WTC11 (cell line): ENCODE measurements at regions of chr19 and their contacts with region 1.

Region 1: GRCh38 chr19:19643158-19644053 is at the start of gene GMIP:
- DNase-seq: peak; percentile 93
- ATAC-seq: peak; percentile 94
- H3K4me3 Mint-ChIP-seq: peak within 1 kb of the TSS; percentile 94
- H3K27ac Mint-ChIP-seq: peak within 1 kb of the TSS; percentile 84
- H3K4me1 Mint-ChIP-seq: peaks cover 12% of the 10 kb centered on the region
- H3K27me3 Mint-ChIP-seq: peaks cover under 1% of the 10 kb centered on the region; the same call in 1 of the 2 replicates
- CTCF ChIP-seq: peak; percentile 92
- total RNA-seq, gene GMIP: 19.8 to 23.0 TPM (median 21.9 TPM) in 3 replicates

Region 2: GRCh38 chr19:19485161-19485997 is 158.0 kb before region 1 on chr19:
- CTCF ChIA-PET with region 1: no interaction called
- POLR2A ChIA-PET with region 1: no interaction called
- DNase-seq: no peak
- ATAC-seq: no peak
- H3K4me3 Mint-ChIP-seq: no peak overlapping the region
- H3K27ac Mint-ChIP-seq: peak overlapping the region; percentile 85
- H3K4me1 Mint-ChIP-seq: peaks cover 60% of the 10 kb centered on the region
- H3K27me3 Mint-ChIP-seq: no peaks in the 10 kb centered on the region
- CTCF ChIP-seq: no peak

Region 3: GRCh38 chr19:19540715-19541440 is 102.5 kb before region 1 on chr19:
- CTCF ChIA-PET with region 1: interaction called, 10 read pairs
- POLR2A ChIA-PET with region 1: no interaction called
- DNase-seq: peak; percentile 98
- ATAC-seq: peak; percentile 95
- H3K4me3 Mint-ChIP-seq: peak overlapping the region; percentile 88
- H3K27ac Mint-ChIP-seq: peak overlapping the region; percentile 85
- H3K4me1 Mint-ChIP-seq: peaks cover 6% of the 10 kb centered on the region
- H3K27me3 Mint-ChIP-seq: peaks cover 36% of the 10 kb centered on the region
- CTCF ChIP-seq: no peak

Region 4: GRCh38 chr19:19618219-19619051 is 25.0 kb before region 1 on chr19 and contains the start of gene PBX4:
- CTCF ChIA-PET with region 1: interaction called, 10 read pairs
- POLR2A ChIA-PET with region 1: no interaction called
- DNase-seq: peak; percentile 99
- ATAC-seq: peak; percentile 98
- H3K4me3 Mint-ChIP-seq: peak within 1 kb of the TSS; percentile 73
- H3K27ac Mint-ChIP-seq: no peak within 1 kb of the TSS
- H3K4me1 Mint-ChIP-seq: peaks cover 13% of the 10 kb centered on the region
- H3K27me3 Mint-ChIP-seq: peaks cover 29% of the 10 kb centered on the region
- CTCF ChIP-seq: no peak
- total RNA-seq, gene PBX4: 3.2 to 4.5 TPM (median 3.5 TPM) in 3 replicates

Region 5: GRCh38 chr19:19627621-19628500 is 15.5 kb before region 1 on chr19 and contains the start of gene LPAR2:
- CTCF ChIA-PET with region 1: interaction called, 23 read pairs
- POLR2A ChIA-PET with region 1: interaction called, 7 read pairs
- DNase-seq: peak; percentile 76
- ATAC-seq: peak; percentile 77
- H3K4me3 Mint-ChIP-seq: peak within 1 kb of the TSS; percentile 90
- H3K27ac Mint-ChIP-seq: peak within 1 kb of the TSS; percentile 98
- H3K4me1 Mint-ChIP-seq: peaks cover 17% of the 10 kb centered on the region
- H3K27me3 Mint-ChIP-seq: no peaks in the 10 kb centered on the region; the same call in 1 of the 2 replicates
- CTCF ChIP-seq: no peak
- total RNA-seq, gene LPAR2: 42.9 to 45.1 TPM (median 44.5 TPM) in 3 replicates

Region 6: DNA sequence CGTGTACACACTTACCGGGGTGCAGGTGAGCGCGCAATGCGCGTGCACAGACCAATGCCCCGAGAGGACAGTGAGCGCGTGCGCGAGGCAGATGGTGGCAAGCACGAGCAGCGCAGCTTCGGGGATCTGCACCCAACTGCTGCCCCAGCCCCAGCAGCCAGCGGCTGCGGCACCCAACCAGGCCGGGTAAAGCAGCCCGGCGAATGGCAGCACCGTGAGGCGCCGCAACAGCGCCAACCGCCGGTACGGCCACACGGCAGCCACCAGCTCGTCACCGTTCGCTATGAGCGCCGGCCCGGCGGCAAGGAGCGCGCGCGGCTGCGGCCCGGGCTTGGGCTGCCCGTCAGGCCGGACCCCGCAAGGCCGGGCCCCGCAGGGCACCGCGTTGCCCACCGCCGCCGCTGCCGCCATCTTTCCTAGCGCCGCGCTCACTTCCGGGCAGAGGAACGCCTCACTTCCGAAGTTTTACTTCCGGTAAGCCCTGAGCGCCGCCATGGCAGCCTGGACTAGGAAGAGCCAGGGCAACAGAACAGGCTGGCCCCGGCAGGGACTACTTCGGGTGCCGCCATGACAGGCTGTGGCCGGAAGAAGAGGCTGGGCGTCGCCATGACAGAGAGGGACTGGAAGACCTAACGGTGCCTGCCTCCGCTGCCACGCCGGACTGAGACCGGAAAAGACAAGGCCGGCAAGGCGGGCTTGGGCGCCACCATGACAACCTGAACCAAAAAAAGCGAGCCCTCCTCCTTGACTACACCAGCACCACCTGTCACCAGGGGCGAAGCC is 20.0 kb after region 1 on chr19 and contains the start of gene ATP13A1:
- CTCF ChIA-PET with region 1: interaction called, 25 read pairs
- POLR2A ChIA-PET with region 1: interaction called, 6 read pairs
- DNase-seq: peak; percentile 88
- ATAC-seq: peak; percentile 77
- H3K4me3 Mint-ChIP-seq: peak within 1 kb of the TSS; percentile 94
- H3K27ac Mint-ChIP-seq: peak within 1 kb of the TSS; percentile 97
- H3K4me1 Mint-ChIP-seq: peaks cover 23% of the 10 kb centered on the region
- H3K27me3 Mint-ChIP-seq: no peaks in the 10 kb centered on the region; the same call in 1 of the 2 replicates
- CTCF ChIP-seq: no peak
- total RNA-seq, gene ATP13A1: 63.4 to 82.6 TPM (median 64.3 TPM) in 3 replicates